ENCODE measurements at regions of chr12 and their contacts with region 1.

Region 1: GRCh38 chr12:93569656-93570551 is 2.6 kb upstream of the SOCS2 start:
- DNase-seq: peak; percentile 35 to 91
- H3K4me3 ChIP-seq: peak overlapping the region; percentile 88 to 90
- H3K27ac ChIP-seq: peak overlapping the region; percentile 92 to 93
- H3K4me1 ChIP-seq: no peaks in the 10 kb centered on the region
- H3K27me3 ChIP-seq: no peaks in the 10 kb centered on the region
- CTCF ChIP-seq: peak; percentile 77 to 90 (median 79)

Region 2: GRCh38 chr12:93317227-93317626 is 252.7 kb before region 1 on chr12:
- intact Hi-C with region 1: no loop called
- DNase-seq: no peak
- H3K4me3 ChIP-seq: no peak overlapping the region
- H3K27ac ChIP-seq: no peak overlapping the region
- H3K4me1 ChIP-seq: no peaks in the 10 kb centered on the region
- H3K27me3 ChIP-seq: no peaks in the 10 kb centered on the region
- CTCF ChIP-seq: no peak

Region 3: GRCh38 chr12:93502802-93503623 is 66.9 kb before region 1 on chr12:
- intact Hi-C with region 1: loop called (anchors 2 kb)
- DNase-seq: peak in 1 of 2 donors; percentile 67
- H3K4me3 ChIP-seq: no peak overlapping the region
- H3K27ac ChIP-seq: no peak overlapping the region
- H3K4me1 ChIP-seq: no peaks in the 10 kb centered on the region
- H3K27me3 ChIP-seq: no peaks in the 10 kb centered on the region
- CTCF ChIP-seq: peak; percentile 57 to 81 (median 75)

Region 4: DNA sequence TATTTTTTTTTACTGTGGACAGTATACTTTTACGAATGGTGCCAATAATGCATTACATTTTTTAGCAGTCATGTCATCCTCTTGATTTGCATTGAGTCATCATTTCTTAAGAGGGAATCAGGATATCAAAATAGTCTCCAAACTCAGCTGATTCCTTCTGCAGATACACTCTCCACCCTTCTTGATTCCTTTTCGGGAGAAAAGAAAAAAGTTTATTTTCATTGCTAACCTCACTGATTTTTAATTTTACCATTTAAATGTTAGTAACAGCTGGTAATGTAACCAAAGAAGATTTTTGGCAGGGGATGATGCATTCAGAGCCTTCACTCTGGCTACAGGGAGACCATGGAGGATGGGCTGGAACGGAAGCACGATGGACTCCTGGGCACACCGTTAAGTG is 55.1 kb before region 1 on chr12:
- intact Hi-C with region 1: no loop called
- DNase-seq: no peak
- H3K4me3 ChIP-seq: no peak overlapping the region
- H3K27ac ChIP-seq: no peak overlapping the region
- H3K4me1 ChIP-seq: no peaks in the 10 kb centered on the region
- H3K27me3 ChIP-seq: no peaks in the 10 kb centered on the region
- CTCF ChIP-seq: no peak

Region 5: DNA sequence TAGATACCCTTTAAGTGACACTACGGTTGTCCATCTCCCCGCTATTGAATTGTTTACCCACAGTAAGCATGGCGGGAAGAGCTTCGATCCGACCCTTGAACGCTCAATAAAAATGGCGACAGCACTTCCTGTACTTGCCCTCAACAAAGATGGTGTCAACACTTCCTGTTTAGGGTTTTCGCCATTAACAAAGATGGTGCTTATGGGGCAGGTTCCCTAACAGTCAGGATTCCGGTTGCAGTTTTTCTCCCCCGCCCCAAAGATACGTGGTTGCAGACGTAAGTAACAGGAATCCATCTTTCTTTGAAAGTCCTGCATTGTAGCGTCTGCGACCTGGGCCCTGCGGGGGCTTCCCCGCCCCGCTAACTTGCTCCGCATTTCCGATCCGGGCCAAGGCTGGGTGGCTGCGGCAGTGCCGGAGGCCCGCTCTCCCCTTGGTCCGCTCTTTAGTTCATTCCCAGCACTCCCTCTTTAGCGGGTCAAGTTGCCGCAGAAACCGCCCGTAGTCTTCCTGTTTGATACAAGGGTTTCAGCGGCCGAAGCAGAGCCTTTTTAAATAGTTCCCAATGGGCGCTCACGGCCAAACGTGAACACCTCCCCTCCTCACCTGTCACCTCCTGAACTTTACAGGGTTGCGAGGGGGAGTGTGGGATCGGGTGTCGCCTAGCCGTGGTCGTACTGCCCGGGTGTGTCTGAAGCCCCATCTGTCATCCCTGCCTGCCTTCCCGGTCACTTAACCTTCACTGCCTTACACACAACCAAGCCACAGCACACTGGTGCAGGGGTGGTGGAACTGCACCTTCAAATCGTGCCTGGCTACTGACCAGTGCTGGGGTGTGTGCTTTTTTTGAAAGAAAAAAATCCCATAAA is 107.5 kb after region 1 on chr12 and contains the start of gene CRADD:
- intact Hi-C with region 1: loop called (anchors 1 kb)
- DNase-seq: peak; percentile 53 to 93
- H3K4me3 ChIP-seq: peak within 1 kb of the TSS; percentile 74 to 84
- H3K27ac ChIP-seq: peak within 1 kb of the TSS; percentile 98 to 99
- H3K4me1 ChIP-seq: peaks cover 0 to 24% of the 10 kb centered on the region in 2 donors
- H3K27me3 ChIP-seq: no peaks in the 10 kb centered on the region
- CTCF ChIP-seq: no peak
- total RNA-seq, gene CRADD: not detected

Region 6: GRCh38 chr12:93766796-93767523 is 197.1 kb after region 1 on chr12:
- intact Hi-C with region 1: loop called (anchors 5 kb)
- DNase-seq: peak in 1 of 2 donors; percentile 72
- H3K4me3 ChIP-seq: peak overlapping the region; percentile 5 to 26
- H3K27ac ChIP-seq: peak overlapping the region; percentile 6 to 31
- H3K4me1 ChIP-seq: peaks cover 3 to 4% of the 10 kb centered on the region in 2 donors
- H3K27me3 ChIP-seq: no peaks in the 10 kb centered on the region
- CTCF ChIP-seq: peak; percentile 42 to 65 (median 59)

Region 7: GRCh38 chr12:93894391-93895088 is 324.6 kb after region 1 on chr12:
- intact Hi-C with region 1: loop called (anchors 1 kb)
- DNase-seq: peak; percentile 57 to 94
- H3K4me3 ChIP-seq: peak overlapping the region in 1 of 2 donors; percentile 2
- H3K27ac ChIP-seq: peak overlapping the region; percentile 73 to 75
- H3K4me1 ChIP-seq: peaks cover 4 to 17% of the 10 kb centered on the region in 2 donors
- H3K27me3 ChIP-seq: no peaks in the 10 kb centered on the region
- CTCF ChIP-seq: no peak

Region 8: DNA sequence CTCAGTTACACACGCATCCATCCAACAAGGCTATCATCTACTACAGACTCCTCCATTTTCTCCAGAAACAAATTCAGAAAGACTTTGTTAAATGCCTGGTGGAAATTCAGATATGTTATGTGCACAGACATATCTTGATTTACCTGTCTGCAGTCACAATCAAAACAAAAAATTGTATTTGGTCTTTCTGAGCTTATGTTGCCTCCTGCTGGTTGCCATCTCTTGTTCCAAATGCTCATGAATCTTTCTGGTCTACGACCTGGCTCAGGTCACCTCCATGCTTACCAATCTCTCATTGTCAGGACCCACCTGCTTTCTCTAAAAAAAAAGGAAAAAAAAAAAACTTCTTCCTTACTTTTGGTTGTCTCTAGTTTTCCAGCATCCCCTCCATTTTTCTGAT is 409.3 kb after region 1 on chr12:
- intact Hi-C with region 1: loop called (anchors 2 kb)
- DNase-seq: no peak
- H3K4me3 ChIP-seq: no peak overlapping the region
- H3K27ac ChIP-seq: no peak overlapping the region
- H3K4me1 ChIP-seq: peaks cover 0 to 7% of the 10 kb centered on the region in 2 donors
- H3K27me3 ChIP-seq: no peaks in the 10 kb centered on the region
- CTCF ChIP-seq: peak; percentile 10 to 40 (median 20)

Region 9: GRCh38 chr12:94459728-94460615 is 890.1 kb after region 1 on chr12 and contains the start of gene CEP83:
- intact Hi-C with region 1: loop called (anchors 10 kb)
- DNase-seq: peak; percentile 87 to 97
- H3K4me3 ChIP-seq: peak within 1 kb of the TSS; percentile 74 to 97
- H3K27ac ChIP-seq: peak within 1 kb of the TSS; percentile 83 to 92
- H3K4me1 ChIP-seq: peaks cover 0 to 14% of the 10 kb centered on the region in 2 donors
- H3K27me3 ChIP-seq: no peaks in the 10 kb centered on the region
- CTCF ChIP-seq: no peak
- total RNA-seq, gene CEP83: 23.6 TPM

Region 10: DNA sequence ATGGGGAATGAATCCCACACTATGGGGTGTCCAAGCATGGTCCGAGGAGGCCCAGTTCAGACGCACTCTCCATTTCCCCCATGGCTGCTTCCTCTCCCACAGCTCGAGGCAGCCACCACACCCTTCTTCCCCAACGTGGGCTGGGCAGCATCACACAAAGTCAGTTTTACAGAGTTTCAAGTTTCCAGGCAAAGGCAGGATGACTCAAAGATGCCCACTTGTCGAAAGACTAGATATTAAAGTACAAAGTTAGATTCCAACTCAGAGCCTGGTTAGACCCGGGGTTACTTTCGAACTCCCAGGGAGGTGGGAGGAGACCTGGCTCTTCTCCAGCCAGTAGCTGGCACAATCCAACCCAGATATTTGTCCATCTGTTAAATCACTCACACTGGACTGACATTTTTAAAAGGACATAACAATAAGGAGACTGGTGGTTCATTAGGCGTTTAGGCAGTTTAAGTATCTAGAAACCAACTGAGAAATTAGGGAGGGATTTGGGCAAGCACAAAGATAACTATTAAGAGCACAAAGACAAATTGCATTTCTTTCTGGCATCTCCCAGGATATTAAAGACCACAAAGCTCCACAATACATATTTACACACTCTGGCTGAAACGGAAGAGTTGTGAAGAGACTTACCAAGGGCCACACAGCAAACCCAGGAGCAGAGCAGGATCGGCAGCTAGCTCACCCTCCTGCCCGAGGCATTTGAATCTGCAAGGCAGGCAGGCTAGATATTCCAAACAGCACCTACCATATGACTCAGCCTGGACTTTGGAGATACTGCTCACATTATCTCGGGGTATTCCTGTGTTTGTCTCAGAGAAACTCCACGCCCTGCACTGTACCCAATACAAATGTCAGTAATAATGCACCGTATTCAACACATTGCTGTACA is 1045.6 kb after region 1 on chr12:
- intact Hi-C with region 1: no loop called
- DNase-seq: no peak
- H3K4me3 ChIP-seq: no peak overlapping the region
- H3K27ac ChIP-seq: no peak overlapping the region
- H3K4me1 ChIP-seq: no peaks in the 10 kb centered on the region
- H3K27me3 ChIP-seq: no peaks in the 10 kb centered on the region
- CTCF ChIP-seq: no peak